ENCODE measurements at regions of chr17 and their contacts with region 1.

Region 1: DNA sequence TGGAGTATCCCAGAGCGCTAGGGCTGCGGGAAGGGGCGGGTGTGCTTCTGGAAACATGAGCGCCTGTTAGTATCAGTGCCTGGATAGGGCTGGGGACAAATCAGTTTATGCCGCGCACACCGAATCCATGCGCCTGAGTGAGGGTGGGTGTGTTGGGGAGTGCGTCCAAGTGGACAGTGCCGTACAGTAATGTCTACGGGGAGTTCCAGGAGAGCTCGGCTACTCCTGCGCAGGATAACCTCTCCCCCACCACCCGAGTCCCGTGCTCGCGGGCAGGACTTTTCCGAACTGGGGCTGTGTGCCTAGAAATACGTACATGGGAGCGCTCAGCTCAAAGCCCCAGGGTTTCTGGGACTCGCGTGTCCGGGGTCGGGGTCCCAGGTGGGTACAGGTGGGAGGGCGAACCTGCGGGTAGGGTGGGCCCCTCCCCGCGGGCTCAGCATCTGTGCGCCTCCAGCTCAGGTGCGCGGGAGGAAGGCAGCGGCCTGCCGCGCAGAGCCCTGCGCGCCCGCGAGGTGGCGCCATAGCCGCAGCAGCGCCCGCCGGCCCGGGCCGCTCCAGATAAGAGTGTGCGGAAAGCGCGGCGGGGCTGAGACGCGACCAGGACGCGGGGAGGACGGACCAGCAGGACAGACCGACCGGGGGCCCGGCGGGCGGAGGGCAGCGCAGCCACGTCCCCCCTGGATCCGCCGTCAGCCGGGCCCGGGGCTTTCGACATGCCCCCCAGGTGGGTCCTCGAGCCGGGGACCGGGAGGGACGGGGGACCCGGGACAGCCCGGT is at the start of gene HIC1:
- DNase-seq: peak; percentile 85
- ATAC-seq: peak; percentile 62
- total RNA-seq, gene HIC1: 20.6 to 22.1 TPM

Region 2: DNA sequence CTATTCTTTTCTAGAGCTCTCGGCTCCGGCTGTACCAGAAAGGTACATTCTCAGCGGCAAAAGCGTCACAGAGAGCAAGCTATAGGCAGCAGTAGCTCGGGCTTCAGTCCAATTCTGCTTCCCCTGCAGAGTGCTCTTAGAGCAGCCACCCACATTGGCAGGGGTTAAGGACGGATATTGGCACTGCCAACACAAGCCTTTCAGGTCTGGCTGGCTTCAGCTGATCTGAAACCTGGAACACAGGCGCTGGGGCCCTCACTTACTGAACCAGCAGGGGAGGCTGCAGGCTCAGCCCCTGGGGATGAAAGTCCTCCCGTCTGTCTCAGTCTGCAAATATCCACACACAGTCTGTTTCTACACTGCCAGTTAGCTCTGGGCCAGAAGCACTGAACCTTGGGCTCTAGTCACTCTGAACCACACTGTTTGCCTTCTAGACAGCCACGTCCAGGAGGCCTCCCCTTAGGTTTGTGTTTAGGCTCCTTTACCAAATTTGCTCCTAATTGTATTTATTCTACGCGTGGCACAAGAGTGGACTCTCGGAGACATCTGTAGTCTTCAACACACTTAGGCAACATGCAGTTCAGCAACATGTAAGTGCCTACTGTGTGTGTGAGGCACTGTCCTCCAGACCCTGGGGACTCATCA is 40.3 kb after region 1 on chr17:
- intact Hi-C with region 1: loop called in 1 of 2 experiments (anchors 5 kb)
- DNase-seq: peak; percentile 71
- ATAC-seq: peak; percentile 83 to 88

Region 3: GRCh38 chr17:2122641-2123302 is 68.1 kb after region 1 on chr17:
- intact Hi-C with region 1: no loop called
- DNase-seq: peak; percentile 85
- ATAC-seq: peak; percentile 71 to 85

Region 4: DNA sequence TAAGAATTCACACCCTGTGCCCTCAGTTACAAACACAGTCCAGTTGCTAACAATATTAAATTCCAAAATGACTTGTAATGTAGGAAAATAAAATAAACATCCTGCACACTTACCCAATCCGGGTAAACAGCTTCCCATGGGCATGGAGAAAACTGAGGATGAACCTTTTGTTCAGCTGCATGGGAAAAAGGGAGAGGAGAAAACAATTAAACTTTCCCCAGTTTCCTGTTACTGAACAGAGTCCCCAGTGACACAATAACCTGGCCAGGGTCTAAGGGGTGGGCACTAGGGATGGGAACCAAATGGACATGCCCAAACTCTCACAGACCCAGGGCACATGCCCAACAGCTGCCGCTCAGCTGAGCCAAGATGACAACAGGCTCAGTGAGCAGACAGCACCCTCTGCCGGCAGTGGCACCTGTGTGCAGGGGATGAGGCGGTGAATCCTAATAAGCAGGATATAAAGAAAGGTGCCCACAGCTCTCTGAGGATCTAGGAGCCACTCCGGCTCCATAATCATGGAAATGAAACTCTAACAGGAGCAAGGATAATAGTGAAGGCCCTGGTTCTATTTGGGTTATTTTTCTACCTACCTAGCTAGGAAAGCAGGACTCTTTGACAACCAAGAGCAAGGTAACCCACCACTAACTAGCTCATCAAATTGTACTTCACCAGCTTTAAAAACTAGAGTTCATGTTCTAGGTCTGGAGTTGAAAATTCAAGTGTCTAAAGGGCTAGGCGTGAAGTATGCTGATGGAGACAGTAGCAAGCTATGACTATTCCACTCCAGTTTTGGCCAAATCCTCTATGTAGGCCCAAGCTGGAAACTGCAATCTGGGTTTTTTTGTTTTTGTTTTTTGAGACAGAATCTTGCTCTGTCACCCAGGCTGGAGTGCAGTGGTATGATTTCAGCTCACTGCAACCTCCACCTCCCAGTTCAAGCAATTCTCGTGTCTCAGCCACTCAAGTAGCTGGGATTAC is 190.1 kb after region 1 on chr17:
- intact Hi-C with region 1: loop called (anchors 2 kb)
- DNase-seq: peak; percentile 90
- ATAC-seq: peak; percentile 90 to 95

Region 5: GRCh38 chr17:2282297-2282873 is 227.7 kb after region 1 on chr17:
- intact Hi-C with region 1: loop called in 1 of 2 experiments (anchors 2 kb)
- DNase-seq: no peak
- ATAC-seq: peak; percentile 38 to 59

Measured in left cardiac atrium (tissue), 4 donors.